PC-9 (cell line): ENCODE measurements at regions of chr3 and their contacts with region 1.

Region 1: DNA sequence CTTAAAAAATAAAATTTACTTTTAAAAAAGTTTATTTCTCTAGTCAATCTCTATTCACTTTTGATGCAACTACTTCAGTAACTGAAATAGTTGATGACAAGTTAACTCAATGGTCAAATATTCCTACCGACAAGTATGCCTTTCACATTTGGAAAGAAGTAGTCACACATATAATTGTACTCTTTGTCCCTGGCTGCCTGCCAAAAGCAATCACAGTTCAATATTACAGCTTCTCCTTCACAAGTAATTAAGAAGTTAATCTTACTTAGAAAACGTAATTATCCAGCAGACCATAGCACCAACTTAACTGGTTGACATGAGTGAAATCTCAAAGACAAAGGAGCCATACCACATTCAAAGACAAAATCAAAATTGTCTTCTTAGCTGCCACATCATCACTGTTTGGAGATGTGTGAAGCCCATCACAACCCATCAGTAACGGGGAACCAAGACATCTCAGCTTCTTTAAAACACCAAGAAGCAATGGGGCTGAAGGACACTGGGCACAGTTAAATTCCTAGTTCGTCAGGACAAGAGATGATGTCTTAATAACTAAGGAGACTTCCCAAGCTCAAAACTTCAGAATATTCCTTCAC is 86.1 kb downstream of the PLCH1 start:
- DNase-seq: no peak
- H3K4me3 ChIP-seq: no peak overlapping the region
- H3K27ac ChIP-seq: no peak overlapping the region
- H3K4me1 ChIP-seq: peaks cover 18% of the 10 kb centered on the region
- H3K27me3 ChIP-seq: no peaks in the 10 kb centered on the region
- CTCF ChIP-seq: no peak

Region 2: DNA sequence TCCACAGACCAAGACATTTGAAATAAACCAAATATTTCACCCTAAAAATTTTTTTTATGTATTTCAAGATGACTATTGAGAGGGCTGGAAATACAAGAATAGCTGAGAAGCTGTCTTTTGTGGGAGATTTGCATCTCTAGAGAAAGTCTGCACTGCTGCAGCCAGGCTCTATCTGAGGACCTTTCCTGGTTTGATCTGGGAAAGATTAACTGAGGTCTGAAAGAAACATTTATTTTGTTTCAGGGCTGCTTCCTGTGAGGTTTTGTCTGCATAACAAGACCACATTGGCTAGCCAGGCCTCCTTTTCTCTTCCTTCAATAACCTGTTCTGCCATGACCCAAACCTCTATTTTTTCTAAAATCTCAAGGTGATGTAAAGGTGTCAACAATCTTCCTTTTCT is 1655.1 kb before region 1 on chr3:
- CTCF ChIA-PET with region 1: no interaction called
- POLR2A ChIA-PET with region 1: interaction called, 18 read pairs
- intact Hi-C with region 1: no loop called
- DNase-seq: no peak
- H3K4me3 ChIP-seq: no peak overlapping the region
- H3K27ac ChIP-seq: no peak overlapping the region
- H3K4me1 ChIP-seq: no peaks in the 10 kb centered on the region
- H3K27me3 ChIP-seq: no peaks in the 10 kb centered on the region
- CTCF ChIP-seq: no peak